Activated T-helper 2 cell treated with anti-CD3 and anti-CD28 coated beads, Interferon-gamma antibody, Interleukin-2, Interleukin-4, amounts not matched to agents 10 μg/mL and 5 μg/mL and 100 μg/mL, durations not matched to agents 14 hours and 24 hours and 36 hours (primary cell): ENCODE measurements at regions of chr2 and their contacts with region 1.

Region 1: DNA sequence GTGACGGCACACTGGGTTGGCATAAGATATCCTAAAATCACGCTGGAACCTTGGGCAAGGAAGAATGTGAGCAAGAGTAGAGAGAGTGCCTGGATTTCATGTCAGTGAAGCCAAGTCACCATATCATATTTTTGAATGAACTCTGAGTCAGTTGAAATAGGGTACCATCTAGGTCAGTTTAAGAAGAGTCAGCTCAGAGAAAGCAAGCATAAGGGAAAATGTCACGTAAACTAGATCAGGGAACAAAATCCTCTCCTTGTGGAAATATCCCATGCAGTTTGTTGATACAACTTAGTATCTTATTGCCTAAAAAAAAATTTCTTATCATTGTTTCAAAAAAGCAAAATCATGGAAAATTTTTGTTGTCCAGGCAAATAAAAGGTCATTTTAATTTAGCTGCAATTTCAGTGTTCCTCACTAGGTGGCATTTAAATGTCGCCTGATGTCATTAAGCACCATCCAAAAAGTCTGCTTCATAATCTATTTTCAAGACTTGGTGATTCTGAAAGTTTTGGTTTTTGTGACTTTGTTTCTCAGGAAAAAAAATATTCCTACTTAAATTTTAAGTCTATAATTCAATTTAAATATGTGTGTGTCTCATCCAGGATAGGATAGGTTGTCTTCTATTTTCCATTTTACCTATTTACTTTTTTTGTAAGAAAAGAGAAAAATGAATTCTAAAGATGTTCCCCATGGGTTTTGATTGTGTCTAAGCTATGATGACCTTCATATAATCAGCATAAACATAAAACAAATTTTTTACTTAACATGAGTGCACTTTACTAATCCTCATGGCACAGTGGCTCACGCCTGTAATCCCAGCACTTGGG is 19.6 kb downstream of the RSAD2 start:
- DNase-seq: no peak
- H3K4me3 Mint-ChIP-seq: no peak overlapping the region
- H3K27ac Mint-ChIP-seq: peak overlapping the region; percentile 29
- H3K4me1 Mint-ChIP-seq: peaks cover 5% of the 10 kb centered on the region
- H3K27me3 Mint-ChIP-seq: no peaks in the 10 kb centered on the region

Region 2: DNA sequence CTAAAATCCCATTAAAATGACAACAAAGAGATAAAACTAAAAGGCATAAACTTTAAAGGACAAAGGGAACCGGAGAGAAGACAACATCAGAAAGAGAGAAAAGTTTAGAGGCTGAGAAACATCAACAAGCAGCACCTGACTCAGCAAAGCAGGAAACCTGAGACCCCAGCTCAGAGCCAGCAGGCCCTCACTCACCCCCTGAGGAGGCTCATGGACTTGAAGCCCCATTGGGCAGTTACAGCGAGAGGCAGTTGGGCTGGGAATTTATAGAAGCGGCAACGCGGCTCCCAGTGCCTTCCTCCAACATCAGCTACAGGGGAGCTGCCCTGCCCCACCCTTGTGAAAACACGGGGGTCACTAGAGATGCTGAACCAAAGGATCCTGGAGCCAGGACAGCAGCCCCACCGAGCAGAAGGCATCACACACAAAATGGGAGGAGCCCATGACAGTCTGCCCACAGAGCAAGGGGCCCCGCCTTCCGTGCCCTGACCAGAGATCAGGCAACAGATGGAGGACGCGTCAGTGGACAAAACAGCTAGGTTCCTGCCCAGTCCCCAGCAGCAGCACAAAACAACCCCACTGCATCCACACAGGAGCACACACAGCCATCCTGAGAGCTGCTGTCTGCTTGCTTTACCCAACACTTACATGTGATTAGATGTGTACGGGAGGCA is 84.2 kb before region 1 on chr2:
- intact Hi-C with region 1: no loop called
- DNase-seq: no peak
- H3K4me3 Mint-ChIP-seq: no peak overlapping the region
- H3K27ac Mint-ChIP-seq: no peak overlapping the region
- H3K4me1 Mint-ChIP-seq: no peaks in the 10 kb centered on the region
- H3K27me3 Mint-ChIP-seq: peaks cover 22% of the 10 kb centered on the region

Region 3: GRCh38 chr2:6909431-6910385 is 12.6 kb after region 1 on chr2:
- intact Hi-C with region 1: loop called (anchors 1 kb)
- DNase-seq: peak; percentile 61
- H3K4me3 Mint-ChIP-seq: peak overlapping the region; percentile 44
- H3K27ac Mint-ChIP-seq: peak overlapping the region; percentile 82
- H3K4me1 Mint-ChIP-seq: peaks cover 74% of the 10 kb centered on the region
- H3K27me3 Mint-ChIP-seq: no peaks in the 10 kb centered on the region

Region 4: GRCh38 chr2:6917071-6917760 is 20.1 kb after region 1 on chr2 and contains the start of gene RNF144A:
- intact Hi-C with region 1: loop called (anchors 1 kb)
- DNase-seq: peak; percentile 67
- H3K4me3 Mint-ChIP-seq: peak within 1 kb of the TSS; percentile 75
- H3K27ac Mint-ChIP-seq: peak within 1 kb of the TSS; percentile 47
- H3K4me1 Mint-ChIP-seq: peaks cover 54% of the 10 kb centered on the region
- H3K27me3 Mint-ChIP-seq: peaks cover 2% of the 10 kb centered on the region
- total RNA-seq, gene RNF144A: 19.9 and 20.0 TPM in 2 replicates

Region 5: DNA sequence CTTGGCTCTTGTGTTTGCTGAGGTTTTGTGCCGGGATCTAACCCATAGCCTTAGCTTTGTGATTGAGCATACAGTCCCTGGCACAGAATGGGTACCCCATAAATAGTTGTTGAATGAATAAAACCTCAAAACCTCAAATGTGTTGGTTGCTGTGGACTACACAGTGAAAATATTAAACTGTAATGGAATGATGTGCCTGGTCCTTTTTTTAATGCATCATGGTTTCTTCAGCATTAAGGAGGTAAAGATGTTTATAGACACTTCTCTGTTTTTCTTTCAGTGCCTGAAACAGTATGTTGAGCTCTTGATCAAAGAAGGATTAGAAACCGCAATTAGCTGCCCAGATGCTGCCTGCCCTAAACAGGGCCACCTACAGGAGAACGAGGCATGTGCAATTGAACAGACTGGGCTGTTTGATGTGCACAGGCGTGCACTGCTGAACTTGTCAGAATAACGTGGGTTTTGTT is 117.1 kb after region 1 on chr2:
- intact Hi-C with region 1: loop called (anchors 5 kb)
- DNase-seq: peak; percentile 13
- H3K4me3 Mint-ChIP-seq: no peak overlapping the region
- H3K27ac Mint-ChIP-seq: no peak overlapping the region
- H3K4me1 Mint-ChIP-seq: peaks cover 26% of the 10 kb centered on the region
- H3K27me3 Mint-ChIP-seq: no peaks in the 10 kb centered on the region

Region 6: GRCh38 chr2:7044261-7045250 is 147.4 kb after region 1 on chr2:
- intact Hi-C with region 1: loop called (anchors 1 kb)
- DNase-seq: peak; percentile 34
- H3K4me3 Mint-ChIP-seq: no peak overlapping the region
- H3K27ac Mint-ChIP-seq: no peak overlapping the region
- H3K4me1 Mint-ChIP-seq: peaks cover 10% of the 10 kb centered on the region
- H3K27me3 Mint-ChIP-seq: no peaks in the 10 kb centered on the region